Posterior vena cava (tissue), 2 donors: ENCODE measurements at regions of chr9 and their contacts with region 1.

Region 1: DNA sequence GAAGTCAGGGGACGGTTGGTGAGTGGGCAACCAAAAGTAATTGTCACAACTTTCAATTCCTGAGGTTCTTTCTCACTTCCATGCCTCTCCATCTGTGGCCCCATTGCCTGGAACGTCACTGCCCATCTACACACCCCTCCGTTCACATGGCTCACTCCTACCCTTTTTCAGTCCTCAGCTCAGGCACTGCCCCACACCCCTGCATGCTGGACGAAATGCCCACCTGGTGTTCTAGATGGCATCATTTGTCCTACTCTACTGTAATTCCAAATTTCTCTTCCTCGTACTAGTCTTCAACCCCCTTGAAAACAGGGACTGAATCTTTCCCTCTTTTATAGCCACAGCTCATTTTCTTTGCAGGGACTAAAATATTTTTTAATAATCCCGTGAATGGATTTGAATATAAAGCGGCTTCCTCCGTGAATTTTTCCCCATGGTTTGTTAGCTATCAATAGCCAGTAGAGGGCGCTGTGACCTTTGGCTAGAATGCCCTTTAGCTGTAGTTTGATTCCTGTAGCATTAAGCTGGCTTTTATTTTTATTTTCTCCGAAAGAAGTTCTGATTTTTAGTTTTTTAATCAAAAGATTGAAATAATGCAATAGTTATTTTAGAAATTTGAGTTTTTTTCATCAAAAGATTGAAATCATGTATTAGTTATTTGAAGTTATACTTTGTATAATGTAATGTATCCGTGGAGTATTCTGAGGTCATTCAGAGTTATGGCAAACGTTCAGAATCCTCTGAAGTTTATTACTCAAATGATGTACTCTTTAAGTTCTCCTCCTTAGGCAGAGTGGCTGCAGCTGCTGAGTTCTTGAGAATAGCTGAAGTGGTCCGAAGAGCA is 232.1 kb downstream of the SH3GL2 start:
- DNase-seq: no peak

Region 2: GRCh38 chr9:18208154-18209059 is 397.5 kb after region 1 on chr9:
- intact Hi-C with region 1: loop called (anchors 5 to 10 kb)
- DNase-seq: no peak